Naive thymus-derived CD4-positive, alpha-beta T cell (primary cell): ENCODE measurements at regions of chr15 and their contacts with region 1.

Region 1: DNA sequence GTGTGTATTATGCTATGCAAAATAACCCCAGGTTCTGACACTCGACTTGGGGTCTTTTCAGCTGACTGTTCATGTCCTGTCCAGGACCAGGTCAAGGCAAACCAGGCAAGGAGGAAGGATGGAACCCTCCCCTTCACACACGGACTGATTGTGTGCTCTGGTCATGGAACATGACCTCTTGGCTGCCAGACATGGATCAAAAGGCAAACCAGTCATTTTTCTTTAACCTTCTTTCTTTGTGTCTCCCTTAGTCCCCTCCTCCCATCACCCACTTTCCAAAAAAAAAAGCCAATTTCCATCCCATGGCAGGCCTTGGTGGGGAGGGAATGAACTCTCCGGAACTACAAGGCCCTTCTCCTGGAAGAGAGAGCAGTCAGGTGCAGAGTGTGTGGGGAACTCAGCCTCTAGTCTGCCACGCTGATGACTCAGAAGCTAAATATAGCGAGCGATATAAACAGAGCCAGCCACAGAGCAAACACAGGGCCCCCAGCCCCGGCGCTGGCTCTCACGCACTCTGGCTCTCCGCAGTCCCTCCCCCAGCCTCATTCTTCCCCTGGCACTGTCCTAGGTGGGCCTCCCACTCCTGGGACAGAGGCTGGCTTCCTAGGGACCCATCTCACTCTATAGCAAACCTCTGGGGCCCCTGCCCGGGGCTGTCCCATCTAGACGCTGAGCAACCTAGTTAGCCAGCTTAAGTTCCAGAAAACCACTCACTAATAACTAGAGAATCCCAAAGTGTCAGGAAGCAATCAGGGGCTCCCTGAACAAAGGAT is 10.0 kb downstream of the BMF start:
- DNase-seq: peak in 5 of 9 donors; percentile 20 to 76 (median 48)
- ATAC-seq: peak; percentile 90
- H3K4me3 ChIP-seq: no peak overlapping the region
- H3K4me3 Mint-ChIP-seq: peak overlapping the region; percentile 55 to 86 (median 66)
- H3K27ac ChIP-seq: peak overlapping the region; percentile 14
- H3K27ac Mint-ChIP-seq: peak overlapping the region; percentile 28 to 97 (median 81)
- H3K4me1 ChIP-seq: peaks cover 35 to 37% of the 10 kb centered on the region in 2 donors
- H3K4me1 Mint-ChIP-seq: peaks cover 33 to 86% (median 56%) of the 10 kb centered on the region in 7 donors
- H3K27me3 ChIP-seq: no peaks in the 10 kb centered on the region
- H3K27me3 Mint-ChIP-seq: peaks cover 0 to 1% (median 0%) of the 10 kb centered on the region in 5 donors

Region 2: DNA sequence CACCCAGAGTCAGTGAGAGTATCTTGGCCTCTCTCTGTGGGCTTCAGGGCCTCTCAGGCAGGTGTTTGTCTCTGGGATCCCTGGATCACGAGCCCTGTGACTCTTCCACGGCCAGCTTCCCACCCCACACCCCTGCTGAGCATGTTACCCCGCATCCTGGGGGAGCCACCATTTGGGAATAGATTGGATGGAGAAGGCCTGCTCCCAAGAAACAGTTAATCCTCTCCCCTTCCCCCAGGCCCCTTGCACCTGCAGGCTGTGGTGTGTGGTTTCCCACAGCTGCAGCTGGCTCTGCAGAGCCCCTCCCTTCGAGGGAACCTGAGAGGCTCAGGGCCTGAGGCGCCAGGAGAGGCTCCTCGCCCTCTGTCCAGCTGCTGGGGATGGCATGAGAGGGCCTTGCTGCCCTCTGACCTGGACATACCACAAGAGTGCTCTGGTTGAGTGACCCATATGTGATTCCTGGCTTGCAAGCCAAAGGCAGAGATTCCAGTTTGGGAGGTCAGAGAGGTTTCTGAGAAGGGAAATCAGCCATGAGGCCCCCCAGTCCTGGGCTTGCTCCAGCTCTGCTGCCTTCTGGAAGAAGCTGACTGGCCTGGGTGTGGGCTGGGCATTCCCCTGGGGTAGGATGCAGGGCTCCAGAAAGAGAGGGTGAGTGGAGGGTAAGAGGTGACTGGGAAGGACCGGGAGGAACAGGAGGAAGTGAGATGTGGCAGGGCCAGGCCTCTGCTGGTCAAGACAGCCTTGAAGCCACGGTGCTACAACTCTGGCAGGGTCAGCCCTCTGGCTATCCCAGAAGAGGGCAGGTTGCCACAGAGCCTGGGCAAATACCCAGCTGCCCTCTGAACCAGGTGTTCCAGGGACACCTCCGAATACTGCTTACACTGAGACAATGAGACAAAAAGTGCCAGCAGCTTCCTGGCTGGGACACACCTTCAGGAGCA is 43.8 kb before region 1 on chr15:
- CTCF ChIA-PET with region 1: interaction called, 69 read pairs
- POLR2A ChIA-PET with region 1: interaction called, 4 read pairs
- intact Hi-C with region 1: loop called in 1 of 2 experiments (anchors 1 kb)
- DNase-seq: peak in 5 of 9 donors; percentile 33 to 48 (median 42)
- ATAC-seq: peak; percentile 55
- H3K4me3 ChIP-seq: peak overlapping the region; percentile 10
- H3K4me3 Mint-ChIP-seq: peak overlapping the region; percentile 57 to 85 (median 74)
- H3K27ac ChIP-seq: peak overlapping the region; percentile 20
- H3K27ac Mint-ChIP-seq: peak overlapping the region; percentile 61 to 91 (median 83)
- H3K4me1 ChIP-seq: peaks cover 30 to 44% of the 10 kb centered on the region in 2 donors
- H3K4me1 Mint-ChIP-seq: peaks cover 41 to 78% (median 65%) of the 10 kb centered on the region in 7 donors
- H3K27me3 ChIP-seq: no peaks in the 10 kb centered on the region
- H3K27me3 Mint-ChIP-seq: no peaks in the 10 kb centered on the region

Region 3: DNA sequence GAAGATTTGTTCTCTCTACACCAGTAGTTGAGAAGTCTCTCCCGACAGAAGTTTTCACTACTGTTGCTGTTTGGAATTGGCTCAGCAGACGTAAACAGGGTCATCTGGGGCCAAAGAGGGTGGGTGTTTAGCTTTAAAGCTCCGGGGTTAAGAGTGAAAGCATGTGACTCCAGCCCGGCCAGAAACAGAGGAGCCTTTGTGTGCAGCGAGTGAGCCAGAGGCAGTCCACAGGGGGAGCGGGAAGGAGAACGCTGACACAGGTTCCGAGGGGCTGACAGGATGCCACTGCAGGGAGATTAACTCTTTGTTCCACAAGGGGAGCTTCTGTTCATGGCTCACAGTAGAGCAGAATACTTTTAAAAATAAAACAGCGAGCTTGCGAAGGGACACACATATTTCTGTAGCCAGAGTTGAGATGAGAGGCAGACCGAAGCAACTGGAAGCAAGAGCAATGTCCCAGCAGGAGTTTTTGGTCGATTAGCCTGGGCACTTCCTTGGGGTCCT is 16.9 kb before region 1 on chr15:
- CTCF ChIA-PET with region 1: interaction called, 3 read pairs
- POLR2A ChIA-PET with region 1: interaction called, 6 read pairs
- intact Hi-C with region 1: loop called (anchors 1 to 2 kb)
- DNase-seq: no peak
- ATAC-seq: peak; percentile 57
- H3K4me3 ChIP-seq: no peak overlapping the region
- H3K4me3 Mint-ChIP-seq: peak overlapping the region; percentile 67 to 89 (median 79)
- H3K27ac ChIP-seq: no peak overlapping the region
- H3K27ac Mint-ChIP-seq: peak overlapping the region in 6 of 9 donors; percentile 8 to 86 (median 42)
- H3K4me1 ChIP-seq: peaks cover 0 to 18% of the 10 kb centered on the region in 2 donors
- H3K4me1 Mint-ChIP-seq: peaks cover 18 to 41% (median 30%) of the 10 kb centered on the region in 7 donors
- H3K27me3 ChIP-seq: no peaks in the 10 kb centered on the region
- H3K27me3 Mint-ChIP-seq: peaks cover 0 to 30% (median 23%) of the 10 kb centered on the region in 5 donors